Left ventricle myocardium inferior (tissue), 1 donor: ENCODE measurements at regions of chr11 and their contacts with region 1.

Region 1: DNA sequence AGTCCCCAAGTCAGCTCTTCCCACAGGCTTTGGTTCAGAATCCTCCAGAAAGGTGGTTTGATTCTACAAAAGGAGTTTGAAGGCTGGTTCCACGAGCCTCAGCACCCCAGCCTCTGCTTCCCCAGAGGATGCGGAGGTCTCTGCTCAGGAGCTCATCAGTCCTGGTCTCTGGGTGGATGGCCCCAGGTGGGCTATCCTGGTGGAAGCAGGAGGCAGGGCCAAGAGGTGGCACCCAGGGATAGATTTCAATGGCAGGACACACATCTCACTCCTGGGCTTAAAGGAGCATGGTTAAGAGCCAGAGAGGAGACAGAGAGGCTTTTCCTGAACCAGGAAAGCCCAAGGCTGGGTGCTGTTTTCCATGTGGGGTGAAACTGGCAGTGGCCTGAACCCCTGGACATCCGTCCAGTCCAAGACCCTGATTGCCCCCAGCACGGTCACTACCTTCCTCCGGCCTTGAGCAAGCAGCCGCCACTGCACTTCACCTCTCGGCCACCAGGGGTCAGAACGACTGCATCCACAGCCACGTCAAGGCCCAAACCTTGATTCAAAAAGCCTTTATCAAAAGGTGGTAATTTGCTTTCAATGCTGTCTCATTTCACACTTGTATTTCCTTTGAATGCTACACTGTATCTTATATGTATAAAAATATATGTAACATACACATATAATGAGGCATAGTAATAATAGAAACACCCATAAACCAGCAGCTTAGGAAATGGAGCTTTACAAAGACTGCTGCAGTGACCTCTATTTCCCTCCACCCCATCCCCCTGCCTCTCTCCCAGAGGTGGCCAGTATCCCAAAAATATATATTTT is 19.3 kb upstream of the FXYD2 start:
- DNase-seq: peak; percentile 85
- H3K4me3 ChIP-seq: no peak overlapping the region
- H3K27ac ChIP-seq: peak overlapping the region; percentile 13
- H3K4me1 ChIP-seq: peaks cover 24% of the 10 kb centered on the region
- H3K27me3 ChIP-seq: peaks cover 7% of the 10 kb centered on the region
- CTCF ChIP-seq: peak; percentile 100

Region 2: GRCh38 chr11:117907251-117907981 is 63.5 kb after region 1 on chr11:
- intact Hi-C with region 1: loop called (anchors 10 kb)
- DNase-seq: peak; percentile 79
- H3K4me3 ChIP-seq: no peak overlapping the region
- H3K27ac ChIP-seq: no peak overlapping the region
- H3K4me1 ChIP-seq: peaks cover 6% of the 10 kb centered on the region
- H3K27me3 ChIP-seq: peaks cover 11% of the 10 kb centered on the region
- CTCF ChIP-seq: no peak

Region 3: GRCh38 chr11:117946842-117947526 is 103.1 kb after region 1 on chr11:
- intact Hi-C with region 1: loop called (anchors 2 kb)
- DNase-seq: peak; percentile 88
- H3K4me3 ChIP-seq: no peak overlapping the region
- H3K27ac ChIP-seq: no peak overlapping the region
- H3K4me1 ChIP-seq: peaks cover 12% of the 10 kb centered on the region
- H3K27me3 ChIP-seq: peaks cover 23% of the 10 kb centered on the region
- CTCF ChIP-seq: peak; percentile 98